Activated T-helper 2 cell treated with anti-CD3 and anti-CD28 coated beads, Interferon-gamma antibody, Interleukin-2, Interleukin-4, amounts not matched to agents 10 μg/mL and 5 μg/mL and 100 μg/mL, durations not matched to agents 14 hours and 24 hours and 36 hours (primary cell): ENCODE measurements at regions of chr7 and their contacts with region 1.

Region 1: GRCh38 chr7:37186753-37187152 is 261.9 kb downstream of the ELMO1 start:
- DNase-seq: no peak
- H3K4me3 Mint-ChIP-seq: no peak overlapping the region
- H3K27ac Mint-ChIP-seq: peak overlapping the region; percentile 19
- H3K4me1 Mint-ChIP-seq: peaks cover 11% of the 10 kb centered on the region
- H3K27me3 Mint-ChIP-seq: no peaks in the 10 kb centered on the region

Region 2: DNA sequence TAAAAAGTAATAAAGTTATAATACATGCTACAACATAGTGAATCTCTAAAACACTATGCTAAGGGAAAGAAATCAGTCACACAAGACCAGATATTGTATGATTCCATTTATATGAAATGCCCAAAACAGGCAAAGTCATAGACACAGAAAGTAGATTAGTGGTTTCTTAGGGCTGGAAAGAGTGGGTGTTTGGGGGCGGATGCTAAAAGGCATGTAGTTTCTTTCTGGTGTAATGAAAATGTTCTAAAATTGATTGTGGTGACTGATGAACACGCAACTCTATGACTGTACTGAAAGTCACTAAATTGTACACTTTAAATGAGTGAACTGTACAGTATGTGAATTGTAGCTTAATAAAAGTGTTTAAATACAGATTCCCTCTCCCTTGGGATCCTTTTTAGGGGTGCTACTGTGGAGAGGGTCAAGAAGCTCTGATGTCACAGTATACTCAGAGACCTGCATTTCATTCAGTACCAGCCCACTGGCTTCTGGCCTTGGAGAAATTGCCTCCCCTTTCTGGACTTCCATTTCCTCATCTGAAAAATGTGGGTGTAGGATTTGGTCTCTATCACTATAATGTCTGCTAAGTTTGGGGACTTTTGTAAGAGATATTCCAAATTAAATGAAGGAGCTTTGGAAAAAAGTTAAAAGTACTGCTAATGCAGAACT is 508.9 kb before region 1 on chr7:
- intact Hi-C with region 1: loop called (anchors 2 kb)
- DNase-seq: peak; percentile 37
- H3K4me3 Mint-ChIP-seq: peak overlapping the region; percentile 64
- H3K27ac Mint-ChIP-seq: peak overlapping the region; percentile 87
- H3K4me1 Mint-ChIP-seq: peaks cover 65% of the 10 kb centered on the region
- H3K27me3 Mint-ChIP-seq: no peaks in the 10 kb centered on the region

Region 3: GRCh38 chr7:36958111-36958733 is 228.5 kb before region 1 on chr7:
- intact Hi-C with region 1: loop called (anchors 2 kb)
- DNase-seq: no peak
- H3K4me3 Mint-ChIP-seq: no peak overlapping the region
- H3K27ac Mint-ChIP-seq: no peak overlapping the region
- H3K4me1 Mint-ChIP-seq: peaks cover 28% of the 10 kb centered on the region
- H3K27me3 Mint-ChIP-seq: no peaks in the 10 kb centered on the region

Region 4: GRCh38 chr7:37031571-37032257 is 155.0 kb before region 1 on chr7:
- intact Hi-C with region 1: loop called (anchors 5 kb)
- DNase-seq: no peak
- H3K4me3 Mint-ChIP-seq: no peak overlapping the region
- H3K27ac Mint-ChIP-seq: peak overlapping the region; percentile 66
- H3K4me1 Mint-ChIP-seq: peaks cover 50% of the 10 kb centered on the region
- H3K27me3 Mint-ChIP-seq: no peaks in the 10 kb centered on the region

Region 5: GRCh38 chr7:37065779-37066271 is 120.9 kb before region 1 on chr7:
- intact Hi-C with region 1: loop called (anchors 5 kb)
- DNase-seq: no peak
- H3K4me3 Mint-ChIP-seq: no peak overlapping the region
- H3K27ac Mint-ChIP-seq: peak overlapping the region; percentile 86
- H3K4me1 Mint-ChIP-seq: peaks cover 50% of the 10 kb centered on the region
- H3K27me3 Mint-ChIP-seq: no peaks in the 10 kb centered on the region